HEK293 (cell line): ENCODE measurements at regions of chr1 and their contacts with region 1.

Region 1: DNA sequence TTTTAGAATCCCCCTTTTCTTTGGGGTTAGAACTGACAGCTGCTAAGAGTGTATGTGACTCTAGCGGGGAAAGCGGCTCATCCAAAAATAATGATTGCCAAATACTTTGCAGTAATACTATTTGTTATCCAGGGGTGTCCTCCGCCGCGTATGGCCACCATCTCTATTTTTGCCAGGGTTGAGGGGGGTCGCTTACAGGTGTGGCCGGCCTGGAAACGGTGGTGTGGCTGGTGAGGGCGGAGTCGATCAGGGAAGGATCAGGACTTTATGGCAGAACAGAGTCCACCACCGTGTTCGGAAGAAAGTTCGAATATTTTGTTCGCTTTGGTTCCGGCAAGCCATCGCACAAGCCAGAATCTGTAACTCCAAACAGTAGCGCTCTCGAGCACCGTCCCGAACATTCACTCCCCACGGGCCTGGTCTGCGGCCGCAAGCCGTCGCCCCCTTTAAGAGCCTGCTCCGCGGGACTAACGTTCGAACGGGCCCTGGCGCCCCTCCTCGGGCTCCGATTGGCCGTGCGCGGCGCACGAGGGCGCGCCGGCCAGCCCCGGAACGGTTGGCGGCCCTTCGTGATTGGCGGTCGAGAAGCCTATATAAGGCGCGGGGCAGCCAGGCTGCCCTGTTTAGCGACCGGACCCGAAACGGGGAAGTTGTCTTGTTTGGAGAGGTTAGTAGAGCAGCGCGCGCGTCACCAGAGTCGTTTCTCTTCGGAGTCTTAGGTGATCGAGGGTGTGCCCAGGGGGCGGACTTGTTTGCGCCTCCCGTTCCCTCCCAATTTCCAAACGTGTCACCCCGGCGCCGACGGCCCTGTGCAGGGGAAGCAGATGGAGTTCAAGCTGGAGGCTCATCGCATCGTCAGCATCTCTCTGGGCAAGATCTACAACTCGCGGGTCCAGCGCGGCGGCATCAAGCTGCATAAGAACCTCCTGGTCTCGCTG is at the start of gene IER5:
- H3K4me3 ChIP-seq: peak within 1 kb of the TSS; percentile 96
- H3K27ac ChIP-seq: peak within 1 kb of the TSS; percentile 82
- H3K4me1 ChIP-seq: no peaks in the 10 kb centered on the region
- CTCF ChIP-seq: no peak

Region 2: DNA sequence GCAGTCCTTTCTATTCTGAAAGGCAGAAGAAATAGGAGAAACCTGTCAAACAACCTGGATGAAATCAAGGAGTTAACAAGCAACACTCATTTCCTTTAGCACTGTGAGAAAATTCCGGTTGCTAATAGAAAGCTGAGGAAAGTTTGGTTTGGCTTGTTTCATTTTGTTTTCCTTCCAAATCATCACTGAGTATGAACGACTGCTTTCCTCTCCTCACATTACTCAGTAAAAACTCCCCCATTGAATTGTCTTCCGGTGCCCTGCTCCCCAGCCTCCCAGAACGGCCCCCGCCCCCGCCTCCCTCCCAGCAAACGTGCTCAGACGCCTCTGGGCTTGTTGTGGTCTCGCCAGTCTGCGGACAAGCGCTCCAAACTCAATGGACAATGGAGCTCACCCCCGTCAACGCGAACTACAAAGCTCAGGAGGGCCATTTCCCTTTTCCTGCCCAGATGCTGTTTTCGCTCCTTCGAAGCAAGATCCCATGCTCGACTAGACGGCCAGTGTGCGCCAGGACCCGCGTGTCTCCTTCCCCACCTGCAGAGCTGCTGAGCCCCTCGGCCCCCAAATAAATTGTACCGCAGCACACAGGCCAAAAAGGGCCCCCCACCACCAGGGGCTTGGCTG is 66.4 kb before region 1 on chr1:
- CTCF ChIA-PET with region 1: interaction called, 4 read pairs
- POLR2A ChIA-PET with region 1: interaction called, 22 read pairs
- H3K4me3 ChIP-seq: peak overlapping the region; percentile 96
- H3K27ac ChIP-seq: peak overlapping the region; percentile 70
- H3K4me1 ChIP-seq: peaks cover 6% of the 10 kb centered on the region; the same call in 1 of the 2 replicates
- CTCF ChIP-seq: no peak

Region 3: DNA sequence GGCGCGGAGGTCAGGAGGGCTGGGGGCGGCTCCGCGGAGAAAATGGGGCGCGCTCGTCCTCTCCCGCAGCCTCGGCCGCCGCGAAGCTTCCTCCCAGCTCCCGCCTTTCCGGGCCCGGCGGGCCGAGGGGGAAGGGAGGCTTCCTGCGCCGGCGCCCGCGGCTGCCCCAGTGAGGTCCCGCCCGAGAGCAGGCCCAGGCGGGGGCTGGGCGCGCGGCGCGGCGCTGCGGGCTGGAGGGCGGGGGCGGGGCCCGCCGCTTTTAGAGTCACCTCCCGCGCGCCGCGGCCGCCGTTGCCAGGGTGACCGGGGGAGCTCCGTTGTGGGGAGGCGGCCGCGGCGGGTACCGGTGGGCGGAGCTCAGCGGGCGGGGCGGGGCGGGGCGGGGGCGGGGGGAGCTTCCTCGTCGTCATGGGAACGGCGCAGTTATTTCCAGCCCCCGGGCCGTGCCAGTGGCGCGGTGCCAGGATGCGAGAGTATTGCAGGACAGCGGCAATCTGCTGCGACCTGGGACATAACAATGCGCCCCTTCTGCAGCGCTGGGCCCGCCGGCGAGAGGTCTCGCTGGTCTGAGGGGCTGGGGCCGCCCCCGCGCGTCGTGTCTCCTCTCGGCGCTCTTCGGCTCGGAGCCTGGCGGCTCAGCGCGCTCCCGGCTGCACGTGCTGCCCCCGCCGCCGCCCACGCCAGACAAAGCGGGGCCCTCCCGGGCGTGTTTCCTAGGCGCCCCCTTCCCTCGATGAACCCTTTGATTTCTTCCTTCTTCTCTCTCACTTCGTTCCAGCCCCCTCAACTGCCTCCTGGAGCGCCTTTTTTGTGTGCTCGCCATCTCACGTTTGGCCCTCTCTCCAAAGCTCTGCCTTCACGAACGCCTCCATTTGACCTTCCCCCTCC is 17.0 kb after region 1 on chr1:
- CTCF ChIA-PET with region 1: interaction called, 6 read pairs
- POLR2A ChIA-PET with region 1: interaction called, 111 read pairs
- H3K4me3 ChIP-seq: peak overlapping the region; percentile 57
- H3K27ac ChIP-seq: peak overlapping the region; percentile 89
- H3K4me1 ChIP-seq: peaks cover 31% of the 10 kb centered on the region; the same call in 1 of the 2 replicates
- CTCF ChIP-seq: 0 out of 2 replicates have a peak, but pooled peaks have one; percentile 11

Region 4: GRCh38 chr1:181117638-181118449 is 29.5 kb after region 1 on chr1:
- CTCF ChIA-PET with region 1: interaction called, 3 read pairs
- POLR2A ChIA-PET with region 1: interaction called, 10 read pairs
- H3K4me3 ChIP-seq: no peak overlapping the region
- H3K27ac ChIP-seq: peak overlapping the region; percentile 27; the same call in 1 of the 2 replicates
- H3K4me1 ChIP-seq: peaks cover 5% of the 10 kb centered on the region; the same call in 1 of the 2 replicates
- CTCF ChIP-seq: no peak

Region 5: GRCh38 chr1:181128592-181129497 is 40.5 kb after region 1 on chr1:
- CTCF ChIA-PET with region 1: interaction called, 8 read pairs
- POLR2A ChIA-PET with region 1: interaction called, 163 read pairs
- H3K4me3 ChIP-seq: no peak overlapping the region
- H3K27ac ChIP-seq: no peak overlapping the region
- H3K4me1 ChIP-seq: peaks cover 3% of the 10 kb centered on the region; the same call in 1 of the 2 replicates
- CTCF ChIP-seq: no peak

Region 6: DNA sequence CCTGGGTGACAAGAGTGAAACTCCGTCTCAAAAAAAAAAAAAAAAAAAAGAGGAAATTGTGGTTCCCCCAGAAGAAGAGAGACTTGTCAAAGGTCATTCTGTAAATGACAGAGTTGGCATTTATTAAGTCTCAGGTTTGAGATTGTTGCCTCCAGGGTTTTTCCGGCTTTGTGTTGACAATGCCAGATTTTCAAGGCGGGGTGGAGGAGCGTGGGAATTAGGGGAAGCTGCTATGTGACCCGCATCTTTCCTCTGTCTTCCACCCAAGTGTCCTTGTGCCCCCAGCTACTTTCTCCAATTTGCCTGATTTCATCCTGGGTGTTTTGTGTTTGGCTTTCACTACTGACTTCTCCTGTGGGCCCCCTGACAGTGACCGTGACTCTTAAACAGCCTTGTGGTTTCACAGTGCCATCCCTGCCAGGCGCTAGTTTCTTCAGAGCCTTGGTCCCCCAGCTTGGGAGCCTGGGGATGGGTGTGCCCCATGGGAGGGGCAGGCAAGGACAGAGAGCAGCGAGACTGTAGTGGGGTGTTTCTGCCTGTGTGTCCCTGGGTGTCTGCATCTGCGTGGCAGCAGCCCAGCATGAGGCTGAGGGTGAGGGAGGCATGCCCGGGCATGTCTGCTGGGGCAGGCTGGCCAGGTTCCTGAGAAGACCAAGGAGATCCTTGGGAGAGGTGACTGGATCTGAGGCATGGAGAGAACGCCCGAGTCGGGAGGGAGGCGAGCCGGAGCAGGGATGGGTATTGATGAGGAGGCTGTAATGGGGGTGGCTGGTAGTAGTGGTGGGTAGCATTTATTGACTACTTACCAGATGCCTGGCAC is 46.4 kb after region 1 on chr1:
- CTCF ChIA-PET with region 1: interaction called, 67 read pairs
- POLR2A ChIA-PET with region 1: interaction called, 163 read pairs
- H3K4me3 ChIP-seq: no peak overlapping the region
- H3K27ac ChIP-seq: peak overlapping the region; percentile 94
- H3K4me1 ChIP-seq: peaks cover 9% of the 10 kb centered on the region
- CTCF ChIP-seq: no peak

Region 7: DNA sequence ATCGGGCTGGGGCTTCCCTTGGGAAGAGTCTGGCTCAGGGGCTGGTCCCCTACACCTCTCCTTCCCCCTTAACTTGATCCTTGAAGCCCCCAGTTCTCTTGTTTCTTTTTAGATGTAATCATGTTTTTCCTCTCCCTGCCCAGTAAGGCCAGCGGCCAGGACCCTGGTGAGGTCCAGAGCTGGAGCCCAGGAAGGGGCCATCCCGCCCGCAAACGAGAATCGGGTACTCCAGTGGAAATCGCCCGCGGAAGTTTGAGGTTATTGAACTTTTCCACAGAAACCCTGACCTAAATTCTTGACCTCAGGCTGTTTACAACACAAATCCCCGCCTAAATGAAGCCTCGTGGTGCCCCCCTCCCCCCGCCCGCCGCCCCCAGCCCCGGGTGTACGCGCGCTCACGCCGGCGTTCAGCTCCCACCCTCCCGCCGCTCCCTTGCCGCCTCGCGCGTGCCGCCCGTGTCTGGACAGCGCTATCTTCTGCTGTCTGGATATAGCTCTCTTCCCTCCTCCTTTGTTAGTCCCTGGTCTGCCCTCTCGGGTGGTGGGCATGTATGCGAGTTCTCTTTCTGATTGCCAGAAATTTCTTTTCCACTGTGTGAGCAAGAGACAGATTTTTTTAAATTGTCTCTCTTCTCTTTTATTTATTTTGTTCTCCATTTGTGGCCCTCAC is 229.0 kb after region 1 on chr1:
- CTCF ChIA-PET with region 1: no interaction called
- POLR2A ChIA-PET with region 1: no interaction called
- H3K4me3 ChIP-seq: no peak overlapping the region
- H3K27ac ChIP-seq: no peak overlapping the region
- H3K4me1 ChIP-seq: no peaks in the 10 kb centered on the region; the same call in 1 of the 2 replicates
- CTCF ChIP-seq: no peak